H1 (cell line): ENCODE measurements at regions of chr15 and their contacts with region 1.

Region 1: GRCh38 chr15:55434989-55435825 is 26.9 kb downstream of the PIERCE2 start:
- DNase-seq: peak; percentile 7 to 35
- H3K4me3 ChIP-seq: no peak overlapping the region
- H3K27ac ChIP-seq: no peak overlapping the region
- H3K4me1 ChIP-seq: no peaks in the 10 kb centered on the region
- H3K27me3 ChIP-seq: no peaks in the 10 kb centered on the region
- CTCF ChIP-seq: peak in 2 of 3 experiments; percentile 63 to 64; a peak in 3 of 4 replicates
- EP300 ChIP-seq: no peak
- POLR2A ChIP-seq: no peak
- RAD21 ChIP-seq: peak; percentile 74 to 75

Region 2: DNA sequence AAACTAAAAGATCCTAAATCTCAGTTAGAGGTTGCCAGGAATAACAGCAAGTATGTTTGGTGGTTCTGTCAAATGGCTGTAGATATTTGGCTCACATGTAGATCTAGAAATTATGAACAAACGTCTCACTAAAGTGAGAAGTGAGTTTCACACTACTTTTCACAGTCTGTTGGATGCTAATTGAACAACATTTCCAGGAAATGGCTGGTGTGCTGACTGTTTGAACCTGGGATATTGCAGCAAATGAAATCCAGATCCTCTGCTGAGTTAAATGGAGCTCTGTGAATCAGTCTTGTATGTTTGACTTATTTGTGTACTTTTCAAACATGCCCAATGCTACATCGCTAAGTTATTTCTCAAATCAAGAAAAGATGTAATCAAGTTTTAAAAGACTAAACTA is 217.2 kb before region 1 on chr15:
- CTCF ChIA-PET with region 1: interaction called, 29 read pairs
- POLR2A ChIA-PET with region 1: no interaction called
- DNase-seq: no peak
- H3K4me3 ChIP-seq: no peak overlapping the region
- H3K27ac ChIP-seq: no peak overlapping the region
- H3K4me1 ChIP-seq: no peaks in the 10 kb centered on the region
- H3K27me3 ChIP-seq: no peaks in the 10 kb centered on the region
- CTCF ChIP-seq: no peak
- EP300 ChIP-seq: no peak
- POLR2A ChIP-seq: no peak
- RAD21 ChIP-seq: no peak

Region 3: DNA sequence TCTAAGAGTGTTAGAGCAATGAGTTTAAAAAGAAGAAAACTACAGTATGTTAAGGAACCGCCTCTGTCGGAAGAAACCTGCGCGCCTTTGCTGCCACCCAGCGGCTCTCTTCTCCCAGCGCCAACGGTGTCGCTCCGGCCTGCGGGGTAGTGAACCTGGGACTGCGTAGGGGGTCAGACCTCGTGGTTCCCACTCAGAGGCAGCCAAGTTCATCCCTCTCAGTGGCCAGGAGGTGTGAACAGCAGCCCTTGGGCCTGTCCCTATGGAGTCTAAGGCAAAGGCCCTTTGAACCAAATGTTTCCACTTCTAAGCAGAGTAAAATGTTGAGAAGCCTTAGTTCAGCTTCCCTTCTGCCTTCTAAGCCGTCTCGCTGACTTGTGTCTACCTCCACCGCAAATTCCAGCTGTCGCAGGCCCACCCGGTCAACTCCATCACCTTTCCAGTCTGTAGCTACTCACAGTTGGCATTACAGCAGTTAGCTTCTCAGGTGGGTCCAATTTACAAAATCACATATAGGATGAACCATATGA is 144.6 kb before region 1 on chr15:
- CTCF ChIA-PET with region 1: interaction called, 12 read pairs
- POLR2A ChIA-PET with region 1: no interaction called
- DNase-seq: peak; percentile 43 to 83
- H3K4me3 ChIP-seq: peak overlapping the region in 3 of 4 experiments; percentile 39 to 87 (median 77); a peak in 5 of 8 replicates
- H3K27ac ChIP-seq: no peak overlapping the region
- H3K4me1 ChIP-seq: peaks cover 0 to 5% (median 2%) of the 10 kb centered on the region in 4 experiments; a peak in 1 of 7 replicates
- H3K27me3 ChIP-seq: peaks cover 0 to 4% (median 2%) of the 10 kb centered on the region in 4 experiments; a peak in 2 of 7 replicates
- CTCF ChIP-seq: peak; percentile 77 to 85 (median 85)
- EP300 ChIP-seq: no peak
- POLR2A ChIP-seq: no peak
- RAD21 ChIP-seq: peak; percentile 89 to 91

Region 4: DNA sequence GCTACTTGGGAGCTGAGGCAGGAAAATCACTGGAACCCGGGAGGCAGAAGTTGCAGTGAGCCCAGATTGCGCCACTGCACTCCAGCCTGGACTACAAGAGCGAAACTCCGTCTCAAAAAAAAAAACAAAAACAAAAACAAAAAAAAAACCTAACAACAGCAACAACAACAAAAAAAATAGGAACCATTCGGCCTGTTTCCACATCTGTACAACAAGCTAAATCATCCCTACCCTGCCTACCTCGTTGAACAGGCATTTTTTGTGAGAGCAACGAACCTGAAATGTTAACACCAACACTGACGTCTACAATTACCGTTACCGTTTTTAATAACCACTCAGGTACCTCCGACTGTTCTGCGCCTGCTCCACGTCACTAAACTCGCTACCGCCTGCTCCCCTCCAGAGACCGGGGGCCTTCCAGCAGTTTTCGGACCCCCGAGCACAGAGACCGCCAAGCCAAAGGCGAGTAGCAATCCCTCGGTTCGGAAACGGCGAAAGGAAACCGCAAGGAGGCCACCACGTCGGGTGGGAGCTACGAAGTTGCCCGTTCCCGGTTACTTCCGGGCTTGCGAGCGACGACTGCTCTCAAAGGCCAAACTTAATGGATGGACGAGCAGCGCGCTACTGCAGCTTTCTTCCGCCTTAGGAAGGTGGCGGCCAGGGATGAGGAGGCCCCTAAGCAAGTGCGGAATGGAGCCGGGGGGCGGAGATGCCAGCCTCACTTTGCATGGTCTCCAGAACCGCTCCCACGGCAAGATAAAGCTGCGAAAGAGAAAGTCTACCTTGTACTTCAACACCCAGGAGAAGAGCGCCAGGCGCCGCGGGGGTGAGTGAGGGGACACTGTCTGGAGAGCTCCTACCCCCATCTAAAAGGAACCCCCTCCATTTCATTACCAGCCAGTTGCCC is 116.4 kb before region 1 on chr15 and contains the starts of genes PIGB and PIGBOS1:
- CTCF ChIA-PET with region 1: interaction called, 10 read pairs
- POLR2A ChIA-PET with region 1: interaction called, 3 read pairs
- DNase-seq: peak; percentile 74 to 83
- H3K4me3 ChIP-seq: peak within 1 kb of the TSS; percentile 75 to 88 (median 82)
- H3K27ac ChIP-seq: peak within 1 kb of the TSS; percentile 74
- H3K4me1 ChIP-seq: peaks cover 0 to 2% (median 0%) of the 10 kb centered on the region in 4 experiments; a peak in 1 of 7 replicates
- H3K27me3 ChIP-seq: no peaks in the 10 kb centered on the region
- CTCF ChIP-seq: no peak
- EP300 ChIP-seq: no peak
- POLR2A ChIP-seq: peak; percentile 34 to 78
- RAD21 ChIP-seq: peak in 1 of 2 experiments; percentile 19; a peak in 1 of 4 replicates
- total RNA-seq, gene PIGB: 4.3 and 6.1 TPM in 2 replicates
- total RNA-seq, gene PIGBOS1: 7.8 and 9.0 TPM in 2 replicates

Region 5: GRCh38 chr15:55407949-55408791 is 27.0 kb before region 1 on chr15 and contains the starts of genes CCPG1 and PIERCE2:
- CTCF ChIA-PET with region 1: interaction called, 24 read pairs
- POLR2A ChIA-PET with region 1: no interaction called
- DNase-seq: peak; percentile 92 to 93
- H3K4me3 ChIP-seq: peak within 1 kb of the TSS; percentile 62 to 84 (median 77)
- H3K27ac ChIP-seq: peak within 1 kb of the TSS; percentile 35; the same call in 1 of the 2 replicates
- H3K4me1 ChIP-seq: no peaks in the 10 kb centered on the region; a peak in 1 of 7 replicates
- H3K27me3 ChIP-seq: no peaks in the 10 kb centered on the region
- CTCF ChIP-seq: peak; percentile 44 to 74 (median 61)
- EP300 ChIP-seq: 0 out of 3 replicates have a peak, but pooled peaks of 1 of the 2 experiments have one; percentile 5
- POLR2A ChIP-seq: peak in 1 of 2 experiments; percentile 64; a peak in 2 of 3 replicates
- RAD21 ChIP-seq: peak; percentile 12 to 24; a peak in 3 of 4 replicates
- total RNA-seq, gene CCPG1: 13.2 and 13.4 TPM in 2 replicates
- total RNA-seq, gene PIERCE2: 1.4 and 2.7 TPM in 2 replicates

Region 6: GRCh38 chr15:55420171-55420866 is 14.9 kb before region 1 on chr15:
- CTCF ChIA-PET with region 1: interaction called, 19 read pairs
- POLR2A ChIA-PET with region 1: no interaction called
- DNase-seq: no peak
- H3K4me3 ChIP-seq: no peak overlapping the region
- H3K27ac ChIP-seq: no peak overlapping the region
- H3K4me1 ChIP-seq: peaks cover 0 to 4% (median 0%) of the 10 kb centered on the region in 4 experiments; a peak in 2 of 7 replicates
- H3K27me3 ChIP-seq: no peaks in the 10 kb centered on the region
- CTCF ChIP-seq: no peak
- EP300 ChIP-seq: no peak
- POLR2A ChIP-seq: no peak
- RAD21 ChIP-seq: no peak

Region 7: GRCh38 chr15:55507567-55507966 is 72.4 kb after region 1 on chr15:
- CTCF ChIA-PET with region 1: no interaction called
- POLR2A ChIA-PET with region 1: no interaction called
- DNase-seq: no peak
- H3K4me3 ChIP-seq: no peak overlapping the region
- H3K27ac ChIP-seq: no peak overlapping the region
- H3K4me1 ChIP-seq: no peaks in the 10 kb centered on the region
- H3K27me3 ChIP-seq: no peaks in the 10 kb centered on the region
- CTCF ChIP-seq: no peak
- EP300 ChIP-seq: no peak
- POLR2A ChIP-seq: no peak
- RAD21 ChIP-seq: no peak

Region 8: DNA sequence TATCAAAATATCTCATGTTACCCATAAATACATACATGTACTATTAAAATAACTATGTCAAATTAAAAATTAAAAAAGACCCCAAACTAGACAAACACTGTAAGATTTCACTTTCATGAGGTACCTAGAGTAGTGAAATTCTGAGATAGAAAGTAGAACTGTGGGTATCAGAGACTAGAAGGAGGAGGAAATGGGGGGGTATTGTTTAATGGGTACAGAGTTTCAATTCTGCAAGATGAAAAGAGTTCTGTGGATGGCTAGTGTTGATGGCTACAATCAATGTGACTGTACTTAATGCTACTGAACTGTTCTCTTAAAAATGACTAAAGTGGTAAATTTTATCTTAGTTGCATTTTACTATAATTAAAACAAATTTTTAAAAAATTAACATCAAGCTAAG is 771.9 kb after region 1 on chr15:
- CTCF ChIA-PET with region 1: no interaction called
- POLR2A ChIA-PET with region 1: no interaction called
- DNase-seq: no peak
- H3K4me3 ChIP-seq: no peak overlapping the region
- H3K27ac ChIP-seq: no peak overlapping the region
- H3K4me1 ChIP-seq: peaks cover 0 to 11% (median 4%) of the 10 kb centered on the region in 4 experiments; a peak in 4 of 7 replicates
- H3K27me3 ChIP-seq: no peaks in the 10 kb centered on the region
- CTCF ChIP-seq: no peak
- EP300 ChIP-seq: no peak
- POLR2A ChIP-seq: no peak
- RAD21 ChIP-seq: no peak